ENCODE measurements at regions of chr22 and their contacts with region 1.

Region 1: DNA sequence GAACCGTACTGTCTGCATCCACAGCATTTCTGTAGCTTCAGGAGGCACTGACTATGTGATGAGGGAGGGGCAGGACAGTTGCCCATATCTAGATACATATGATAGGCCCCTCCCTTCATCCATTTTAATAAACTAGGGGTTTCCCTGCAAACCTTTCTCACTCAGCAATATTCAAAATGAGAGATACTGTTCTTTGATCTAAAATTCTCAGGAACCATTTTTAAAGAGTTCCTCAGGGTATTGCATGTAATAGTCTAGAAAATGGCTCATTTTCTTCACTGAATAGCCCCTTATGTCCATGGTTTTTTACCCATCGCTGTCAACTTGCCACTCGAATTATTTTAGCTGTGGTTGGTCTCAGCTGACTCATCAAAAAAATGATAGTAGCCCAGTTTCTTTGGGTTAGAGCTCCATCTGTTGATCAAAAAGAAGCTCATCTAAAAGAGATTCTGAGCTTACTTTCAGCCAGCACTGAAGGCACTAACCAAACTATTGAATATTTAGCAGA is 37.0 kb upstream of the DNAJB7 start:
- DNase-seq: peak in 7 of 9 donors; percentile 12 to 52 (median 37)
- ATAC-seq: peak; percentile 67
- H3K4me3 ChIP-seq: no peak overlapping the region
- H3K4me3 Mint-ChIP-seq: peak overlapping the region in 1 of 10 donors; percentile 28
- H3K27ac ChIP-seq: no peak overlapping the region
- H3K27ac Mint-ChIP-seq: peak overlapping the region in 2 of 9 donors; percentile 36 to 44
- H3K4me1 ChIP-seq: no peaks in the 10 kb centered on the region
- H3K4me1 Mint-ChIP-seq: peaks cover 4 to 9% (median 5%) of the 10 kb centered on the region in 7 donors
- H3K27me3 ChIP-seq: no peaks in the 10 kb centered on the region
- H3K27me3 Mint-ChIP-seq: no peaks in the 10 kb centered on the region

Region 2: DNA sequence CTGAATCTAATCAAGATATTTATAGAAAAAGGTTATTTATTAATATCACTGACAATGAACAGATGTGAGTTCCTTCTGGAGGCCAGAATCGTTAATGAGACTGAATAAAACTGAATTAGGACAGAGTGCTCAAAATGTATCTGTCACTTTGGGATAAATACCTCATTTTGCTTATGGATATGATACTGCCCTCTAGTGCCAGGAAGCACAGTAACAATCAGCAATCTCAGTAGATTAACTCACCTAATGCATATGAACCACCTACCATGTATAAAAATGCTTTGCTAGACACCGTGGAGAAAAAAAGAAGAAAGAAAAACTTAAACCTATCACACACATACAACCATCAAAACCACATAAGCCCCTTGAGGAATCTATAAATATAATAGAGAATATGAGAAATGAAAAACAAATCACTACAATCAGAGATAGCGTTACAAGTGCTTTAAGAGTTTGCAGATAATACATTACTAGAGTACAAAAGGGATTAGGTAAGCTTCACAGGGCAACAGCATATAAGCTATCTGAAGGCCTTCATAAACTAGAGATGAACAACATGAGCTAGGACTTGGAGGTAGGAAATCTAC is 411.1 kb before region 1 on chr22:
- CTCF ChIA-PET with region 1: no interaction called
- POLR2A ChIA-PET with region 1: no interaction called
- intact Hi-C with region 1: loop called in 1 of 2 experiments (anchors 2 kb)
- DNase-seq: peak in 7 of 9 donors; percentile 14 to 51 (median 34)
- ATAC-seq: peak; percentile 71
- H3K4me3 ChIP-seq: no peak overlapping the region
- H3K4me3 Mint-ChIP-seq: no peak overlapping the region
- H3K27ac ChIP-seq: no peak overlapping the region
- H3K27ac Mint-ChIP-seq: peak overlapping the region in 6 of 9 donors; percentile 0 to 29 (median 10)
- H3K4me1 ChIP-seq: peaks cover 0 to 32% of the 10 kb centered on the region in 2 donors
- H3K4me1 Mint-ChIP-seq: peaks cover 30 to 62% (median 52%) of the 10 kb centered on the region in 7 donors
- H3K27me3 ChIP-seq: no peaks in the 10 kb centered on the region
- H3K27me3 Mint-ChIP-seq: no peaks in the 10 kb centered on the region

Region 3: DNA sequence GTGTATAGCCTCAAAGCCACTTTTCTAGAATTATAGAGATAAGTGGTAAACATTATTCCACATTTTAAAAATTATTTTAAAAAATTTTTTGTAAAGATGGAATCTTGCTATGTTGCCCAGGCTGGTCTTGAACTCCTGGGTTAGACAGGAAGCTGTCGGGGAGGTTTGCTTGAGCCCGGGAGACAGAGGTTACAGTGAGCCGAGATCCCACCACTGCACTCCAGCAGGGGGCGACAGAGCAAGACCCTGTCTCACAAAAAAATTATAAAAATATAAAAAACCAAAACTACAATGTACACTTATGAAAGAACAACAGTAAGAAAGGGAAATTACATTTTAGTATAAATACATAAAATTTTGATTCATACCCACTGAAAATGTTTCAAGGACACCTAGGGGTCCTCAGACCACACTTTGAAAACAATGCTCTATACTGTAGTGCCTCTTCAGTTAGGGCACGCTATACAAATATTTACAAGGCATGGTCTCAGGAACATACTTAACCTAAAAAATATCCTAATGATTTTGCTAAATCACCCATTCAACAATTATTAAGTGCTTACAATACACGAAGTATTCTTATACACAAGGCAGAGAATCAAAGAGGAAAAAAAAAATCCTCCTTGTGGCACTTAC is 373.5 kb before region 1 on chr22:
- CTCF ChIA-PET with region 1: interaction called, 5 read pairs
- POLR2A ChIA-PET with region 1: no interaction called
- intact Hi-C with region 1: loop called in 1 of 2 experiments (anchors 5 kb)
- DNase-seq: peak; percentile 58 to 80 (median 76)
- ATAC-seq: peak; percentile 74
- H3K4me3 ChIP-seq: no peak overlapping the region
- H3K4me3 Mint-ChIP-seq: peak overlapping the region in 1 of 10 donors; percentile 48
- H3K27ac ChIP-seq: no peak overlapping the region
- H3K27ac Mint-ChIP-seq: peak overlapping the region in 8 of 9 donors; percentile 7 to 86 (median 58)
- H3K4me1 ChIP-seq: peaks cover 0 to 11% of the 10 kb centered on the region in 2 donors
- H3K4me1 Mint-ChIP-seq: peaks cover 13 to 55% (median 51%) of the 10 kb centered on the region in 7 donors
- H3K27me3 ChIP-seq: no peaks in the 10 kb centered on the region
- H3K27me3 Mint-ChIP-seq: no peaks in the 10 kb centered on the region

Region 4: DNA sequence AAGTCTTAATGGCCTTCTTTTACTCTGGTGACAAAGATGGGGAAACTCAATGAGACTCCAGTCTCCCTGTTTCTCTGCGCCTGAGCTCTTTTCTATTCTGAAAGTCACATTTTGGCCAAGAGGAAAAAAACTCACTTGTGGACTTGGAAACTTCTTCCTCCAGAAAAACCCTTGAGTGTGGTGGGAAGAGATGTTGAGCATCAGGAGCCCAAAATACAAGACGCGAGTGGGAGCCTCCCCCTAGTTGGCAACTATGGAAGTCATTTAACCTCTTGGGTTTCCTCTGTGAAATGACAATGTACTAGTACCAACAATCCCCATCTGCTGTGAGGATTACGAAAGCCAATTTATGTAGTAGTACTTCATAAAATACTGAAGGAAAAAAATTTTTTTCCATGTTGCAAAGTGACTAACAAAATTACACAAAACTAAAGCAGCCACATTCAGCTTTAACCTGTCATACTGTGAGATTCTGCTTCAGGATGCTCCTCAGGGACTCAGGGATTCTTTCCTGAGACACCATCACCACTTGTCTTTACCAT is 79.2 kb before region 1 on chr22:
- CTCF ChIA-PET with region 1: no interaction called
- POLR2A ChIA-PET with region 1: no interaction called
- intact Hi-C with region 1: no loop called
- DNase-seq: no peak
- ATAC-seq: no peak
- H3K4me3 ChIP-seq: peak overlapping the region; percentile 100
- H3K4me3 Mint-ChIP-seq: peak overlapping the region; percentile 79 to 99 (median 93)
- H3K27ac ChIP-seq: peak overlapping the region; percentile 86
- H3K27ac Mint-ChIP-seq: peak overlapping the region in 8 of 9 donors; percentile 57 to 88 (median 76)
- H3K4me1 ChIP-seq: peaks cover 9 to 26% of the 10 kb centered on the region in 2 donors
- H3K4me1 Mint-ChIP-seq: peaks cover 17 to 37% (median 35%) of the 10 kb centered on the region in 7 donors
- H3K27me3 ChIP-seq: no peaks in the 10 kb centered on the region
- H3K27me3 Mint-ChIP-seq: no peaks in the 10 kb centered on the region

Region 5: GRCh38 chr22:40932396-40932795 is 33.5 kb after region 1 on chr22:
- CTCF ChIA-PET with region 1: no interaction called
- POLR2A ChIA-PET with region 1: no interaction called
- intact Hi-C with region 1: no loop called
- DNase-seq: no peak
- ATAC-seq: no peak
- H3K4me3 ChIP-seq: no peak overlapping the region
- H3K4me3 Mint-ChIP-seq: no peak overlapping the region
- H3K27ac ChIP-seq: no peak overlapping the region
- H3K27ac Mint-ChIP-seq: no peak overlapping the region
- H3K4me1 ChIP-seq: no peaks in the 10 kb centered on the region
- H3K4me1 Mint-ChIP-seq: no peaks in the 10 kb centered on the region
- H3K27me3 ChIP-seq: no peaks in the 10 kb centered on the region
- H3K27me3 Mint-ChIP-seq: no peaks in the 10 kb centered on the region

Measured in naive thymus-derived CD4-positive, alpha-beta T cell (primary cell).